A673 (cell line): ENCODE measurements at regions of chr11 and their contacts with region 1.

Region 1: GRCh38 chr11:94656968-94657367 is 89.8 kb downstream of the PIWIL4 start:
- DNase-seq: peak; percentile 56
- H3K4me3 ChIP-seq: no peak overlapping the region
- H3K27ac ChIP-seq: no peak overlapping the region
- H3K4me1 ChIP-seq: no peaks in the 10 kb centered on the region
- H3K27me3 ChIP-seq: no peaks in the 10 kb centered on the region
- CTCF ChIP-seq: no peak

Region 2: GRCh38 chr11:94731880-94732601 is 75.1 kb after region 1 on chr11:
- CTCF ChIA-PET with region 1: no interaction called
- POLR2A ChIA-PET with region 1: no interaction called
- intact Hi-C with region 1: loop called (anchors 5 kb)
- DNase-seq: peak; percentile 79
- H3K4me3 ChIP-seq: no peak overlapping the region
- H3K27ac ChIP-seq: no peak overlapping the region
- H3K4me1 ChIP-seq: peaks cover 36% of the 10 kb centered on the region
- H3K27me3 ChIP-seq: no peaks in the 10 kb centered on the region
- CTCF ChIP-seq: no peak